Activated naive CD4-positive, alpha-beta T cell treated with anti-CD3 and anti-CD28 coated beads for 36 hours (primary cell): ENCODE measurements at regions of chr9 and their contacts with region 1.

Region 1: DNA sequence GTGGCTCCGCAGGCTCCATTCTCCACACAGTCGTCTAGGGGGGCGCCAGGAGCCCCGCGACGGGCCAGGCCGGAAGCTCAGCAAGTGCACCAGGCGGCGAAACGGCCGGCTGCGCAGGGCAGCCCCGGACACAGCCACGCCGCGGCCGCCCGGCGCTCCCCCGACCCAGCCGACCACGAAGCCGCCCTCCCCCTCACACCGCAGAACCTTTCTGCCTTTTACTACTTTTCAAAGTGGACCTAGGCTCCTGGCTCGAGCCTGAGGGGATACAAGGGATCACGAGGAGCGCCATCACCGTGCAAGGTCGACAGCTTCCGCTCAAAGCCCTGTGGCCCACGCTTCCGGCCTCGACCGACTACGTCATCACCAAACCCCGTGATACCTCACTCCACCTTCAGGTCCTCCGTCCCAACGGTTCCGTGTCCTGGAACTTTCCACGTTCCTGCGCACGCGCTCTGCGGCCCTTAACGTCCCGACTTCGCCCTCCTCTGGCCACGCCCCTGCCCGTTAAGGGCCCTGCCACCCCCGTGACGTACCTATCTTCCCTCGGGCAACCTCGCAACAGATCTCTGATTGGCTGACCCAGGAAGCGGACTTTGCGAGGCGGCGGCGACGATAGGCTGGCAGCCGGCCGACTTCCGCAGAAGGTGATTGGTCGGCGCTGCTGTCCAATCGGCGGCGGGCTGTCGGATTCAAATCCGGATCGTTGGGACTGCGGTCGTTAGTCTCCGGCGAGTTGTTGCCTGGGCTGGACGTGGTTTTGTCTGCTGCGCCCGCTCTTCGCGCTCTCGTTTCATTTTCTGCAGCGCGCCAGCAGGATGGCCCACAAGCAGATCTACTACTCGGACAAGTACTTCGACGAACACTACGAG is at the start of gene CKS2:
- DNase-seq: peak; percentile 100
- H3K4me3 Mint-ChIP-seq: peak within 1 kb of the TSS; percentile 96
- H3K27ac Mint-ChIP-seq: peak within 1 kb of the TSS; percentile 98
- H3K4me1 Mint-ChIP-seq: peaks cover 49% of the 10 kb centered on the region
- H3K27me3 Mint-ChIP-seq: no peaks in the 10 kb centered on the region
- total RNA-seq, gene CKS2: 278 to 292 TPM

Region 2: DNA sequence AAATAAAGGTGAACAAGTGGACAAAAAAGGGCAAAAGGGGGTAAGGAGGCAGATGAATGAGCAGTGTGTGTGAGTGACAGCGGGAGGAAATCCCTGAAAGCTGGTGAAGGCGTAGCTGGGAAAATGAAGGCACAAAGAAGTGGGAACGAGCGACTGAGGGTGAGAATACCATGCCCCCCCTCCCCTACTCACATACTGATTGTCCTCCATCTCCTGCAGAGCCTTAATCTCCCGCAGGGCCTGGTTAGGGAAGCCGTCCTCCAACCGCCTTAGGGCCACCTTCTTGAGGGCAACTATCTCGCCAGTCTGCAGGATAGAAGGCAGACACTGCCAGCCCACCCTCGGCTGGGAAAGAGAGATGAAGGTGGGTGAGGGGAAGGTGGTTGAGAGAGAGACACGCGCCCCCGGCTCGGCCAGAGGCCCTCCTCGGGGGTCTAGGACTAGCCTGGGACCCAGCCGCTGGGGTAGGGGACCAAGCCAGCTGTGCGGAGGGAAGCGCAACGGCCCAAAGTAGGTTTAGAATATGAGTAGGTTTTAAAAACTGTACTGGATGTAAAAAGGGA is 1336.9 kb before region 1 on chr9:
- CTCF ChIA-PET with region 1: no interaction called
- intact Hi-C with region 1: loop called (anchors 5 kb)
- DNase-seq: no peak
- H3K4me3 Mint-ChIP-seq: peak overlapping the region; percentile 93
- H3K27ac Mint-ChIP-seq: no peak overlapping the region
- H3K4me1 Mint-ChIP-seq: peaks cover 19% of the 10 kb centered on the region
- H3K27me3 Mint-ChIP-seq: no peaks in the 10 kb centered on the region

Region 3: GRCh38 chr9:88322906-88323566 is 987.7 kb before region 1 on chr9:
- CTCF ChIA-PET with region 1: no interaction called
- intact Hi-C with region 1: loop called (anchors 2 kb)
- DNase-seq: peak; percentile 78
- H3K4me3 Mint-ChIP-seq: no peak overlapping the region
- H3K27ac Mint-ChIP-seq: peak overlapping the region; percentile 37
- H3K4me1 Mint-ChIP-seq: peaks cover 30% of the 10 kb centered on the region
- H3K27me3 Mint-ChIP-seq: no peaks in the 10 kb centered on the region

Region 4: DNA sequence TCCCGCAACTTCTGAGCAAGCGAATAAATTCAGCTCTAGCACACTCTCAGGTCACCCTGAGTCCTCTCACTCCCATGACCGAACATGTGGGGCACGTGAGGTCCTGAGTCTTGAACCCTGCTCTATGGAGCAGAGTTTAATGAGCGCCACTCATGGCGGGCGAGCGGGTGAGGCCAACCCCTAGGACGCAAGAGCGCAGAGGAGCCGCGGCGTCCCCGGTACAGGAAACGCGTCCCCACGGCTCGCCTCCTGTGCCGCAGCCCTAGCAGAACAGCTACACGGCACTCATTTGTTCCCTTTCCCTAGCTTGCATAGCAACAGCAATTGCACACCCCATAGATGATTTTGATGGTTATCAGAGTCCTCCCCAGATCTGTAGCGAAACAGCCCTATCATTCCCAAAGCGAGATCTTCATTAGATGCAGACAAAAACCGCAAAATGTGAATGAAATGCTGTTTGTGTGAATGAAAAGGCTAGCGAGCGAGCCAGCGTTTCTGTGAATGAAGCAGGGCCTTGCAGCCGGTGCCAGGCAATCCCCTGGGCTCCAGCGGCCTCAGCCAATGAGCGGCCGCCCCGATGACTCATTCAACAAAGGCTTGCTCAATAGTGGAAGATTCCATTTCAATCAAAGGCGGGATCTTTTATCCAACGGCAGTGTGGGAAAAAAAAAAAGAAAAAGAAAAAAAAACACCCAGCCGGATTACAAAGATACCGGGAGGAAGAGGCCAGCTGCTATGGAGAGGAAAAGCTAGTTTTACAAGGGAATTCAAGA is 130.6 kb before region 1 on chr9:
- CTCF ChIA-PET with region 1: interaction called, 3 read pairs
- intact Hi-C with region 1: loop called (anchors 1 kb)
- DNase-seq: peak; percentile 88
- H3K4me3 Mint-ChIP-seq: peak overlapping the region; percentile 50
- H3K27ac Mint-ChIP-seq: peak overlapping the region; percentile 1
- H3K4me1 Mint-ChIP-seq: peaks cover 23% of the 10 kb centered on the region
- H3K27me3 Mint-ChIP-seq: peaks cover 50% of the 10 kb centered on the region

Region 5: GRCh38 chr9:89278997-89279739 is 31.5 kb before region 1 on chr9:
- CTCF ChIA-PET with region 1: interaction called, 4 read pairs
- intact Hi-C with region 1: loop called (anchors 1 kb)
- DNase-seq: peak; percentile 38
- H3K4me3 Mint-ChIP-seq: no peak overlapping the region
- H3K27ac Mint-ChIP-seq: no peak overlapping the region
- H3K4me1 Mint-ChIP-seq: peaks cover 41% of the 10 kb centered on the region
- H3K27me3 Mint-ChIP-seq: peaks cover 1% of the 10 kb centered on the region

Region 6: GRCh38 chr9:89522261-89522958 is 211.7 kb after region 1 on chr9:
- CTCF ChIA-PET with region 1: no interaction called
- intact Hi-C with region 1: loop called (anchors 1 kb)
- DNase-seq: peak; percentile 89
- H3K4me3 Mint-ChIP-seq: peak overlapping the region; percentile 58
- H3K27ac Mint-ChIP-seq: peak overlapping the region; percentile 96
- H3K4me1 Mint-ChIP-seq: peaks cover 93% of the 10 kb centered on the region
- H3K27me3 Mint-ChIP-seq: no peaks in the 10 kb centered on the region